Caco-2 (cell line): ENCODE measurements at regions of chr6 and their contacts with region 1.

Region 1: DNA sequence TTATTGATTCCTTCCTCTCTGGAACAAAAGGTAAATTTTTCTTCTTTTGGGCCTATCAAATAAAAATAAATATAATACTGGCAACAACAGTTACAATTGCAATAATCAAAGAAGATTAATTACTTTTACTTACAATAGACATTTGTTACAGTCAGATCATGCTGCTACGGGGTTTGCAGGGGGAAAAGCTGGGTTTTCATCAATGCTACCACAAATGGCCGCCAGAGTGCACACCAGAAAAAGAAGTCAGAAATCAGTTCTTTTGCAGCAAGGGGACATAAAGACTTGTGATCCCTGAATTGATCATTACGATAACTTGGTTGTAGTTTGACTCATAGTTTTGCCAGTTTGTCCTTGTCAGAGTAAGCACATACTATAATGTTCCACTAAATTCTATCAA is 714.5 kb upstream of the EYS start:
- DNase-seq: peak in 1 of 2 experiments; percentile 2
- H3K4me3 ChIP-seq: no peak overlapping the region
- H3K4me3 Mint-ChIP-seq: no peak overlapping the region
- H3K27ac Mint-ChIP-seq: no peak overlapping the region
- H3K4me1 ChIP-seq: no peaks in the 10 kb centered on the region
- H3K4me1 Mint-ChIP-seq: no peaks in the 10 kb centered on the region
- H3K27me3 ChIP-seq: no peaks in the 10 kb centered on the region
- H3K27me3 Mint-ChIP-seq: no peaks in the 10 kb centered on the region
- CTCF ChIP-seq: peak; percentile 35 to 49

Region 2: GRCh38 chr6:66496659-66497058 is 75.1 kb after region 1 on chr6:
- CTCF ChIA-PET with region 1: interaction called, 3 read pairs
- POLR2A ChIA-PET with region 1: no interaction called
- intact Hi-C with region 1: loop called (anchors 1 kb)
- DNase-seq: peak in 1 of 2 experiments; percentile 35
- H3K4me3 ChIP-seq: no peak overlapping the region
- H3K4me3 Mint-ChIP-seq: no peak overlapping the region
- H3K27ac Mint-ChIP-seq: no peak overlapping the region
- H3K4me1 ChIP-seq: no peaks in the 10 kb centered on the region
- H3K4me1 Mint-ChIP-seq: no peaks in the 10 kb centered on the region
- H3K27me3 ChIP-seq: no peaks in the 10 kb centered on the region
- H3K27me3 Mint-ChIP-seq: no peaks in the 10 kb centered on the region
- CTCF ChIP-seq: peak; percentile 31 to 35